ENCODE measurements at regions of chr11 and their contacts with region 1.

Region 1: GRCh38 chr11:12680246-12680939 is 6.2 kb downstream of the TEAD1 start:
- DNase-seq: peak; percentile 72 to 90
- ATAC-seq: peak; percentile 64 to 80
- H3K4me3 ChIP-seq: peak overlapping the region in 2 of 4 donors; percentile 32 to 37
- H3K27ac ChIP-seq: peak overlapping the region; percentile 83 to 96 (median 91)
- H3K4me1 ChIP-seq: peaks cover 91 to 92% of the 10 kb centered on the region in 2 donors
- H3K27me3 ChIP-seq: no peaks in the 10 kb centered on the region
- CTCF ChIP-seq: no peak
- POLR2A ChIP-seq: peak; percentile 49 to 69

Region 2: GRCh38 chr11:12066799-12067508 is 613.4 kb before region 1 on chr11:
- in situ Hi-C with region 1: loop called in 1 of 4 experiments (anchors 25 kb)
- intact Hi-C with region 1: loop called (anchors 10 kb)
- DNase-seq: peak; percentile 80 to 90
- ATAC-seq: peak; percentile 74 to 79
- H3K4me3 ChIP-seq: no peak overlapping the region
- H3K27ac ChIP-seq: peak overlapping the region; percentile 84 to 89 (median 86)
- H3K4me1 ChIP-seq: peaks cover 44 to 45% of the 10 kb centered on the region in 2 donors
- H3K27me3 ChIP-seq: no peaks in the 10 kb centered on the region
- CTCF ChIP-seq: no peak
- POLR2A ChIP-seq: peak; percentile 55 to 73

Region 3: GRCh38 chr11:12802418-12803085 is 122.2 kb after region 1 on chr11:
- in situ Hi-C with region 1: loop called in 2 of 4 experiments (anchors 25 kb)
- intact Hi-C with region 1: no loop called
- DNase-seq: no peak
- ATAC-seq: peak in 1 of 2 donors; percentile 3
- H3K4me3 ChIP-seq: no peak overlapping the region
- H3K27ac ChIP-seq: peak overlapping the region; percentile 29 to 71 (median 52)
- H3K4me1 ChIP-seq: peaks cover 69 to 81% of the 10 kb centered on the region in 2 donors
- H3K27me3 ChIP-seq: no peaks in the 10 kb centered on the region
- CTCF ChIP-seq: no peak
- POLR2A ChIP-seq: no peak

Region 4: DNA sequence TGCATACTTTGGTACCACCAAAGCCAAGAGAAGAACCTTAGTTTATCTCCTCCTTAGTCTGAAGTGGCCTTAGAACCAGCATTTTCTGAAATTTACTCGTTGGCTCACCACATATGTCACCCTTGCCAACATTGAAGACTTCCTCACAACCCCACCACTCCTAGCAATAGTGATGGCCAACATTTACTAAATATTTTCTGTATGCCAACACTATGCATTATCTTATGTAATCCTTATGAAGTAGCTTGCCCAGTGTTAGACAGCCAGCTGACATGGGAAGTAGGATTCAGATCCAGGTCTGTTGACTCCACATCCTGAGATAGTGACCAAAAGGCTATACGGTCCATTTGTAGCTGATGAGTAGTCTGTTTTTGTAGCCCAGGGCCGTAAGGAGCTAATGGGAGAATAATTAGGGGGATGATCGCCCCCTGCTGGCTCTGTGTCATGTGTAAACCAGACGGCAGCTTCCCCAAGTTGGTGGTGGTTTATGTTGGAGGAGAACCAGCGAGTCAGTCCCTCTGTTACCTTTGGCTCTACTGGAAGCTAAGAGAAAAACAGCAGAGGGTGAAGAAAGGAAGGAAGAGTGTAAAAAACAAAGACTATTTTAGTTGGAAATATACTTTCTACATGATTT is 208.2 kb after region 1 on chr11:
- in situ Hi-C with region 1: loop called in 3 of 4 experiments (anchors 5 to 25 kb)
- intact Hi-C with region 1: no loop called
- DNase-seq: peak; percentile 69 to 83
- ATAC-seq: peak; percentile 84 to 85
- H3K4me3 ChIP-seq: no peak overlapping the region
- H3K27ac ChIP-seq: peak overlapping the region; percentile 61 to 82 (median 70)
- H3K4me1 ChIP-seq: peaks cover 25 to 32% of the 10 kb centered on the region in 2 donors
- H3K27me3 ChIP-seq: no peaks in the 10 kb centered on the region
- CTCF ChIP-seq: peak; percentile 63 to 81 (median 75)
- POLR2A ChIP-seq: no peak